Endothelial cell of umbilical vein (primary cell): ENCODE measurements at regions of chr7 and their contacts with region 1.

Region 1: DNA sequence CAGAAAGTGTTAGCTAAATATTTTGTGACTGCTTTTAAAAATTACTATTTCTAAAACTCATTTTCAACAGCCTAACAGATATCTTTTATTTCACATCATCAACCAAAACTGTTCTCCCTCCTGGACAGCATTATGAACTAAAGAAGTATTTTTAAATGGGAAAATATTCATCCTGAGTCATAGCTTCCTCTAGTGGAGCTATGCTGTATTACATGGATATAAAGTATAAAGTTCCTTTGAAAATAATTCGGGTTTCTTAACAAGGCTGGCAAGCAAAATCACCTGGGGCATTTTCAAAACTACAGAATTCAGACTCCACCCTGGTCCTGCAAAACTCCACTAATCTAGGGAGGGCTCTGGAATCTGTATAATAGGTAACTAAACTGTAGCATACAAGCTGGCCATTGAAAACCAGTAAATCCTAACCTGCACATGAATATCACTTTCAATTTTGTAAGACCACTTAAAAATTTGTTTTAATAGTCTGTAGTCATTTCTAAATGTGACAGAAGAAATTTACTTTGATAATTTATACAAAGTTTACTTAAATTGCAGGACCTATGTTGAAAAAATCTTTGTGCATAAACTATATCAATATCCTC is 53.5 kb downstream of the SCIN start:
- DNase-seq: peak; percentile 54
- H3K4me3 ChIP-seq: no peak overlapping the region
- H3K27ac ChIP-seq: no peak overlapping the region
- H3K4me1 ChIP-seq: peaks cover 28% of the 10 kb centered on the region
- H3K27me3 ChIP-seq: peaks cover 0 to 2% of the 10 kb centered on the region in 2 experiments
- CTCF ChIP-seq: peak; percentile 34 to 57
- POLR2A ChIP-seq: no peak

Region 2: GRCh38 chr7:12423355-12423994 is 200.5 kb before region 1 on chr7:
- CTCF ChIA-PET with region 1: no interaction called
- POLR2A ChIA-PET with region 1: no interaction called
- dilution Hi-C with region 1: no loop called
- intact Hi-C with region 1: loop called (anchors 10 kb)
- DNase-seq: peak; percentile 47
- H3K4me3 ChIP-seq: no peak overlapping the region
- H3K27ac ChIP-seq: peak overlapping the region; percentile 75
- H3K4me1 ChIP-seq: peaks cover 15% of the 10 kb centered on the region
- H3K27me3 ChIP-seq: no peaks in the 10 kb centered on the region
- CTCF ChIP-seq: no peak
- POLR2A ChIP-seq: no peak

Region 3: DNA sequence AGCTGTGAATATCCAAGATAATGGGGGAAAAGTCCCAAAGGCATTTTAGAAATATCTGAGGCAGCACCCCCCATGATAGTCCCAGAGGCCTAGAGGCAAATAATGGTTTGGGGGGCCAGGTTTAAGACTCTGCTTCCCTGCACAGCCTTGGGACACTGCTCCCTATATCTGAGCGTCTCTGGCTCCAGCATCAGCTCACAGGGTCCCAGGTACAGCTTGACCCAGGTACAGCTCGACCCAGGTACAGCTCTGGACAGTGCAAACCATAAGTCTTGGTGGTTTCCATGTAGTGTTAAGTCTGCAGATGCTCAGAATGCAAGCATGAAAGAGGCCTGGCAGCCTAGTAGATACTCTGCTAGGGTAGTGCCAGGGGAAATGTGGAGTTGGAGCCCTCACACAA is 173.4 kb before region 1 on chr7:
- CTCF ChIA-PET with region 1: no interaction called
- POLR2A ChIA-PET with region 1: no interaction called
- dilution Hi-C with region 1: no loop called
- intact Hi-C with region 1: no loop called
- DNase-seq: no peak
- H3K4me3 ChIP-seq: no peak overlapping the region
- H3K27ac ChIP-seq: no peak overlapping the region
- H3K4me1 ChIP-seq: no peaks in the 10 kb centered on the region
- H3K27me3 ChIP-seq: peaks cover 0 to 5% of the 10 kb centered on the region in 2 experiments
- CTCF ChIP-seq: no peak
- POLR2A ChIP-seq: no peak

Region 4: GRCh38 chr7:12524794-12525386 is 99.1 kb before region 1 on chr7:
- CTCF ChIA-PET with region 1: interaction called, 139 read pairs
- POLR2A ChIA-PET with region 1: no interaction called
- dilution Hi-C with region 1: no loop called
- intact Hi-C with region 1: loop called (anchors 1 kb)
- DNase-seq: peak; percentile 75
- H3K4me3 ChIP-seq: no peak overlapping the region
- H3K27ac ChIP-seq: no peak overlapping the region
- H3K4me1 ChIP-seq: no peaks in the 10 kb centered on the region
- H3K27me3 ChIP-seq: peaks cover 2 to 24% of the 10 kb centered on the region in 2 experiments
- CTCF ChIP-seq: peak; percentile 7 to 33
- POLR2A ChIP-seq: no peak

Region 5: GRCh38 chr7:12570534-12571461 is 53.2 kb before region 1 on chr7 and contains the start of gene SCIN:
- CTCF ChIA-PET with region 1: interaction called, 3 read pairs
- POLR2A ChIA-PET with region 1: no interaction called
- dilution Hi-C with region 1: no loop called
- intact Hi-C with region 1: loop called (anchors 2 kb)
- DNase-seq: peak; percentile 31
- H3K4me3 ChIP-seq: peak within 1 kb of the TSS; percentile 1 to 25 (median 18)
- H3K27ac ChIP-seq: no peak within 1 kb of the TSS
- H3K4me1 ChIP-seq: peaks cover 9% of the 10 kb centered on the region
- H3K27me3 ChIP-seq: peaks cover 23 to 40% of the 10 kb centered on the region in 2 experiments
- CTCF ChIP-seq: no peak
- POLR2A ChIP-seq: no peak
- total RNA-seq, gene SCIN: 0.69 TPM in 1 of 2 replicates, not detected in the other

Region 6: DNA sequence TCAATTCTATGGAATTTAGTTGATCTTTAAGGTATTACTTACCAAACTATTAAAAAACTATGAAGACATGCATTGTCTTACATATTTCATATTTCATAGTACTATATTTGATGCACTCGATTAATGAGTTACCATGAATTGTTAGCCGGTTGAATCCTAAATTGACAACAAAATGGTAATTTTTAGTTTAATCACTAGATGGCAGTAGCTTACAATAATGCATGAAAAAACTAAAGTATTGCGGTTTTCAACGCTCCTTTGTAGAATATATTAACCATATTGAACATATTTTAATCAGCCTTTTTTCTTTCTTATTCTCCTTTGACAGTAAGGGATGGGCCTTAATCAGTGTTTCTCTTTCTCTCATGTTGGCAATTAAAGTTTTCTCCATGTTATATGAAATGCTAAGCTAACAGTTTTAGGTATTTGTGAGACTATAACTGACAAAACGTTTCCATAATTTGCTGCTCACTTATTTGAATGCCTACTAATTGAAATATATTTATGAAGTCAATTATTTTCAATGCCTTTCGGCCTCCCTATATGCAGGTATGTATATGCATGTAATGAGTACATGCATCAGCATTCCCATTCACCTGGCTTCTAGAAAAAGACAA is 15.0 kb after region 1 on chr7:
- CTCF ChIA-PET with region 1: interaction called, 16 read pairs
- POLR2A ChIA-PET with region 1: no interaction called
- dilution Hi-C with region 1: no loop called
- intact Hi-C with region 1: no loop called
- DNase-seq: peak; percentile 50
- H3K4me3 ChIP-seq: no peak overlapping the region
- H3K27ac ChIP-seq: no peak overlapping the region
- H3K4me1 ChIP-seq: no peaks in the 10 kb centered on the region
- H3K27me3 ChIP-seq: peaks cover 8 to 9% of the 10 kb centered on the region in 2 experiments
- CTCF ChIP-seq: peak in 1 of 2 donors; percentile 17
- POLR2A ChIP-seq: no peak

Region 7: GRCh38 chr7:12653519-12653917 is 29.5 kb after region 1 on chr7:
- CTCF ChIA-PET with region 1: no interaction called
- POLR2A ChIA-PET with region 1: no interaction called
- dilution Hi-C with region 1: no loop called
- intact Hi-C with region 1: no loop called
- DNase-seq: peak; percentile 21
- H3K4me3 ChIP-seq: no peak overlapping the region
- H3K27ac ChIP-seq: no peak overlapping the region
- H3K4me1 ChIP-seq: no peaks in the 10 kb centered on the region
- H3K27me3 ChIP-seq: no peaks in the 10 kb centered on the region
- CTCF ChIP-seq: no peak
- POLR2A ChIP-seq: no peak

Region 8: GRCh38 chr7:13262929-13263530 is 639.0 kb after region 1 on chr7:
- CTCF ChIA-PET with region 1: interaction called, 9 read pairs
- POLR2A ChIA-PET with region 1: no interaction called
- dilution Hi-C with region 1: no loop called
- intact Hi-C with region 1: loop called (anchors 5 kb)
- DNase-seq: peak; percentile 70
- H3K4me3 ChIP-seq: no peak overlapping the region
- H3K27ac ChIP-seq: no peak overlapping the region
- H3K4me1 ChIP-seq: no peaks in the 10 kb centered on the region
- H3K27me3 ChIP-seq: peaks cover 0 to 3% of the 10 kb centered on the region in 2 experiments
- CTCF ChIP-seq: peak; percentile 25 to 33
- POLR2A ChIP-seq: no peak